HEK293 (cell line): ENCODE measurements at regions of chr5 and their contacts with region 1.

Region 1: DNA sequence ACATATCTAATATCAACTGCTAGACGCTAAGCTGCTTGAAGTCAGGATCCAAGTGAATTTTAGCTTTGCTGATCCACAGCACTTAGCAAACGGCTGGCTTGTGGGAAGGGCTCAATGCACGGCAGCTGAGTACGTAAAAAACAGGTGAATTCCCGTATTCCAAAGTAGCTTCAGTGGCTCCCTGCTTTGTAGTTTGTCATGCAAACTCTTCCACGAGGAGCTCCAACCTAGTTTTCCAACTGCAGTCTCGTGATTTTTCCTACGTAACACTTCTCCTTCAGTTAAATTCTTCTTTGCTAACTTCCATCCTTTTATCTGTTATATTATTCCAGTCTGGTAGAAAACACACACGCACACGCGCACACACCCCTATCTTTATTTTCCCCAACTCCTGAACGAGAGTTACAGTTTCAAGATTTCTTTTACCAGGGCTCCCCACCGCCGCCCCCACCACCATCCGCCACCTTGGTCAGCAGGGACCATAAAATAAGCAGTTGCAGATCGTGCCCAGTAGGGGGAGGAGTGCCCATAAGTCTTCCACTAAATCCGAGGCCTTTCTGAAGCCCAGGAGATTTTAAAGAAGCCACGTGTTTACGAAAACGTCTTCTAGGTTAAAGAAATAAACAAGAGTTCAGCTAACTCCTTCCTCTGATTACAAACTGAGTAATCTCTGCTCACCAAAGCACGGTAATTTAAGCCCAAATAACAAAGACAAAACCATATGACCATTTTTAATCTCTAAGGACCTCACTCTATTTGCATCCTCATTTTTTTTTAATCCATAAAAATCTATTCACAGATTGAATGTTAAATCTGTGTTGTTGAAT is 34.8 kb upstream of the TRIO start:
- H3K4me3 ChIP-seq: no peak overlapping the region
- H3K27ac ChIP-seq: no peak overlapping the region
- H3K4me1 ChIP-seq: peaks cover 10% of the 10 kb centered on the region
- CTCF ChIP-seq: no peak

Region 2: DNA sequence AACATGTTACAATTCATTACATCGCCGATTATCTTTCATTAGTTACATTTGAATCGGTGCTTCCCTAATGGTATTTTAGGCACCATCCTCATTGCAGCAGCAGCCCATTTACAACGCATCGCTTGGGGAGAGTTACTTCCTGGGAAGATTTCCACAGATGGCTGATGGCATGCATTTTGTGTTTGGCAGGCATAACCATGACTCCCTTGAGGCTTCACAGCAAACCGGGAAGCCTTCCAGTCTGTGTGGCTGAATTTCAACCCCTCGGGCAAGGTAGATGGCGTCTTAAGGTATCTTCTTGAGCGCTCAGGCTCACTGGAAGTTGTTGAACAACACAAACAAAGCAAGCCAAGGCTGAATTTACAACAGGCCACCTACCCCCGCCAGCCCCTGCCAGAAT is 162.3 kb before region 1 on chr5:
- CTCF ChIA-PET with region 1: no interaction called
- POLR2A ChIA-PET with region 1: no interaction called
- H3K4me3 ChIP-seq: no peak overlapping the region
- H3K27ac ChIP-seq: no peak overlapping the region
- H3K4me1 ChIP-seq: no peaks in the 10 kb centered on the region
- CTCF ChIP-seq: no peak

Region 3: GRCh38 chr5:14081791-14082190 is 26.6 kb before region 1 on chr5:
- CTCF ChIA-PET with region 1: no interaction called
- POLR2A ChIA-PET with region 1: no interaction called
- H3K4me3 ChIP-seq: no peak overlapping the region
- H3K27ac ChIP-seq: no peak overlapping the region
- H3K4me1 ChIP-seq: no peaks in the 10 kb centered on the region
- CTCF ChIP-seq: no peak

Region 4: GRCh38 chr5:14118527-14119320 is 10.3 kb after region 1 on chr5:
- CTCF ChIA-PET with region 1: interaction called, 24 read pairs
- POLR2A ChIA-PET with region 1: no interaction called
- H3K4me3 ChIP-seq: no peak overlapping the region
- H3K27ac ChIP-seq: no peak overlapping the region
- H3K4me1 ChIP-seq: no peaks in the 10 kb centered on the region
- CTCF ChIP-seq: no peak

Region 5: DNA sequence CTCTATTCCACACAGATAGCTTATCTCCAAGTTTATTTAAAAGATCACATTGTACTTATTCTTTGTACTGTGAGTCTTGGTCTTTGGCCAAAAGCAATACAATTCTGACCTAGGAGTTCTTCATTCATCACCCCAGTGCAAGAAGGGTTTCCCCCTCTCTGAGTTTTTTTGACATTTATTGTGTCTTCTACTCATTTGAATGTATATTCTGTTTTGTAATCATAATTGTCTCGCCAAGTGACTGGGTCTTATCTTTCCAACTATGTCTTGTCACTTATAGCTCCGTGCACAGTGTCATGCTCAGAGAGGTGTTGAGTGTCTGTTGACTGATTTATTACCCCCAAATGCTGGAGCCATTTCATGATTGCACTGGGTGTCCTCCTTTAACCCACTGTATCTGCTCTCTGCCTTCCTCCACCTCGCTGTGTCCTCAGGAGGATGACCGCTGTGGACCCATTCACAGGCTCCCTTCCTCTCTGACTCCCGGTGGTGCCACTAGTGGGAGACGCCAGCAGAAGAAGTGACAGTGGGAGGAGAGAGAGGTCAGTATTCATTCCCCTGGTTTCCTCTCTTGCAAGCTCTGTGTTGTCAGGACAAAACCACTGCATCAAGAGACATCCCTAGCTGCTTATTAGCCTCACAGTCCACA is 23.6 kb after region 1 on chr5:
- CTCF ChIA-PET with region 1: interaction called, 12 read pairs
- POLR2A ChIA-PET with region 1: interaction called, 6 read pairs
- H3K4me3 ChIP-seq: no peak overlapping the region
- H3K27ac ChIP-seq: peak overlapping the region; percentile 81
- H3K4me1 ChIP-seq: peaks cover 20% of the 10 kb centered on the region
- CTCF ChIP-seq: peak; percentile 57; the same call in 1 of the 2 replicates